Natural killer cell (primary cell): ENCODE measurements at regions of chr1 and their contacts with region 1.

Region 1: DNA sequence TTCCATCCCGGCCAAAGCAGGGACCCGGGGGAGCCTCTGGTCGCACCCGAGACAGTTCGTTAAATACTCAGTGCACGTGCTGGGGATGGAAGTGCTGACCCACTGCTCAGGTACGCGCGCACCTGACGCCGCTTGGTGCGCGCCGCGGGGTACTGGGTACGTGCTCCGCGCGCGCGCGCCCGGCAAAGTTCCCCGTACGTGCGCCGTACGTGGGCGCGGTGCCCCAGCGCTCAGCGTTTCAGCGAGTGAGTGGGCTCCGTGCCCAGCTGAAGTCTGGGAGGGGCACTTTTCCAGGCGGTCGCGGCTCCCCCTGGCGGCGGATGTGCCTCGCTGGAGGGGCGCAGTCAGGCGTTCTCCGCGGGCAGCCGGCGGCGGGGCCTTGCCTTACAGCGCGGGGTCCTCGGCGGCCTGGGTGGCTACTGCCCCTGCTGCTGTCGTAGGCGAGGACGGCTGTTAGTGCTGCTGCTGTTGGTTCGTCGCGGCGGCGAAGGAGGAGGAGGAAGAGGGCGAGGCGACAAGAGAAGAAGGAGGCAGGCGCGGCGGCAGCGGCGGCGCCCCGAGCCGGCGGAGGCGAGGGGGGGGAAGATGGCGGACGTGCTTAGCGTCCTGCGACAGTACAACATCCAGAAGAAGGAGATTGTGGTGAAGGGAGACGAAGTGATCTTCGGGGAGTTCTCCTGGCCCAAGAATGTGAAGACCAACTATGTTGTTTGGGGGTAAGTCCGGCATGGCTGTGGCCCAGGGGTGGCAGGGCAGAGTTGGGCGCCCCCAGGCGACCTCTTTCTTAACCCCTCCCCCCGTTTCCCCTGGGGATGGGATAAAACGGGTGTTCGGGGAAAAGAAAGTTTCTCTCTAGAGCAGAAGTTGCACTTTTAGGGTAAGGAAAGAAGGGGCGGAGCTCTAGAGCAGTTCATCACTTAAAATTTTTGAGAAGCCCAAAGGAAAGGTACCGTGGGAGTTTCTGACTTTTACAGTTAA is at the start of gene CDC73:
- DNase-seq: peak; percentile 98 to 99
- ATAC-seq: peak; percentile 91 to 98 (median 94)
- H3K4me3 ChIP-seq: peak within 1 kb of the TSS; percentile 93
- H3K4me3 Mint-ChIP-seq: peak within 1 kb of the TSS; percentile 93
- H3K27ac ChIP-seq: peak within 1 kb of the TSS; percentile 97
- H3K27ac Mint-ChIP-seq: peak within 1 kb of the TSS; percentile 88 to 95
- H3K4me1 ChIP-seq: peaks cover 13% of the 10 kb centered on the region
- H3K4me1 Mint-ChIP-seq: peaks cover 46 to 51% of the 10 kb centered on the region in 2 donors
- H3K27me3 ChIP-seq: no peaks in the 10 kb centered on the region
- H3K27me3 Mint-ChIP-seq: no peaks in the 10 kb centered on the region
- CTCF ChIP-seq: peak; percentile 96
- total RNA-seq, gene CDC73: 73.2 to 86.0 (median 82.6) TPM

Region 2: DNA sequence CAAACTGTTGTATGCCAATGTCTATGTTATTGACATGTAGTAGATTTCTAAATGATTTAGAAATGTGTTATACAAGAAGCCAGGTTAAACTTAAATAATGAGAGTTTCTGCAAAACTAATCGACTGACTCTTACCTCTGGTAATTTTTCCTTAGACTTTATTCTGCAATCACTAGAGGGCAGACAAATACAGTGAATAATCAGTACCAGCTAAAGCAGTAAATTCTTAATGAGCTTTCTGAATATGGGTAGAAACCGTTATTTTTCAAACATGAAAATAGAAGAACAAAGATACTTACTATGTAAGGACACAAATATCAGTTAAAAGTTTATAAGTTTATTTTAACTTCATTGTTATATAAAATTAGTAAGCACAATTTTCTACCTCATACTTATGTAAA is 644.3 kb before region 1 on chr1:
- intact Hi-C with region 1: loop called (anchors 5 kb)
- DNase-seq: peak in 1 of 2 donors; percentile 69
- ATAC-seq: peak in 2 of 3 donors; percentile 70 to 74
- H3K4me3 ChIP-seq: no peak overlapping the region
- H3K4me3 Mint-ChIP-seq: no peak overlapping the region
- H3K27ac ChIP-seq: no peak overlapping the region
- H3K27ac Mint-ChIP-seq: no peak overlapping the region
- H3K4me1 ChIP-seq: no peaks in the 10 kb centered on the region
- H3K4me1 Mint-ChIP-seq: no peaks in the 10 kb centered on the region
- H3K27me3 ChIP-seq: peaks cover 3% of the 10 kb centered on the region
- H3K27me3 Mint-ChIP-seq: no peaks in the 10 kb centered on the region
- CTCF ChIP-seq: peak; percentile 61

Region 3: GRCh38 chr1:192767798-192768197 is 354.1 kb before region 1 on chr1:
- intact Hi-C with region 1: no loop called
- DNase-seq: no peak
- ATAC-seq: no peak
- H3K4me3 ChIP-seq: no peak overlapping the region
- H3K4me3 Mint-ChIP-seq: no peak overlapping the region
- H3K27ac ChIP-seq: no peak overlapping the region
- H3K27ac Mint-ChIP-seq: no peak overlapping the region
- H3K4me1 ChIP-seq: no peaks in the 10 kb centered on the region
- H3K4me1 Mint-ChIP-seq: peaks cover 0 to 3% of the 10 kb centered on the region in 2 donors
- H3K27me3 ChIP-seq: no peaks in the 10 kb centered on the region
- H3K27me3 Mint-ChIP-seq: peaks cover 13 to 16% of the 10 kb centered on the region in 2 donors
- CTCF ChIP-seq: no peak

Region 4: DNA sequence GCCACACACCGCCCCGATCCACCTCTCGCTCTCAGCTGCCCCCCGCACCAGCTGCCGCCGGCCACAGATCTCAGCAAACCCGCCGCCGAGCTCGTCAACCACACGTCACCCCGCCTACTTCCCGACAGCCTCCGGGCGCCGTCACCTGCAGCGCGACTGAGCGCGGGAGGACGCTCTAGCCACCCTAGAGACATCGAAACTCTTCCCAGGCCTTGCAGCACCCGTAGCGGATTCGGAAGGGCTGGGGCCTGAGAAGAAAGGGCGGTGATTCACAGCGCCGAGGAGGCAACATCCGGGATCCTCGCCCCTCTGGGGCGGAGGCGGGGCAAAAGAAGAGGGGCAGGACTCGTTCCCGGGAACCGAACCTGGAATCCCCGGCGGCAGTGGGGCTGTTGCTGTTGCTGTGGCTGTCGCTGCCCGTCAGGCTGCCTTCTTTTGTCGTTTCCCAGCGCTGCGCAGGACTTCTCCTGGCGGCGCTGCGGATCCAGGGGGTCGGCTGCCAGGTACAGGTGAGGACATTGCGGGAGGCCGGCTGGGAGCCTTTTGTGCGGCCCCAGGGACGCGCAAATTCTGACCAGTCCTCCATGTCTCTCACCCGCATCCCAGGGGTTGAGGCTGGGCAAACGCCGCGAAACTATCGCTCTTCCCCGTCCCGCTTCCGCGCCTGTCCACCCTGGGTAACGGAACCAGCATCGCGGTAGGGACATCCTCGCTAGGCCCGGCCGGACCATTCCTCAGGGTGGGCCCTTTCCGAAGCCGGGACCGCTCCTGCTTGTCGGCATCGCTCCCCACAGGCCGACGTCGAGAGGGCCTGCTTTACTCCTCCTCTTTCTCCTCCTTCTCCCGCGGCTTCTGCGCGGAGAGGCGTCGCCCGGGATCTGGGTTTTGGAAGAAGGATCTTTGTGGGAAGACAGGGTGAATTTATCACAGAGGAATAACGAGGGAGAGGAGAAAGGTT is 62.4 kb before region 1 on chr1 and contains the starts of genes RO60 and UCHL5:
- intact Hi-C with region 1: loop called (anchors 1 kb)
- DNase-seq: peak; percentile 87 to 98
- ATAC-seq: peak; percentile 85 to 96 (median 88)
- H3K4me3 ChIP-seq: peak within 1 kb of the TSS; percentile 99
- H3K4me3 Mint-ChIP-seq: peak within 1 kb of the TSS; percentile 98
- H3K27ac ChIP-seq: peak within 1 kb of the TSS; percentile 98
- H3K27ac Mint-ChIP-seq: peak within 1 kb of the TSS; percentile 98
- H3K4me1 ChIP-seq: peaks cover 14% of the 10 kb centered on the region
- H3K4me1 Mint-ChIP-seq: peaks cover 67 to 77% of the 10 kb centered on the region in 2 donors
- H3K27me3 ChIP-seq: no peaks in the 10 kb centered on the region
- H3K27me3 Mint-ChIP-seq: no peaks in the 10 kb centered on the region
- CTCF ChIP-seq: no peak
- total RNA-seq, gene RO60: 74.3 to 95.5 (median 78.9) TPM
- total RNA-seq, gene UCHL5: 44.3 to 53.9 (median 51.9) TPM

Region 5: DNA sequence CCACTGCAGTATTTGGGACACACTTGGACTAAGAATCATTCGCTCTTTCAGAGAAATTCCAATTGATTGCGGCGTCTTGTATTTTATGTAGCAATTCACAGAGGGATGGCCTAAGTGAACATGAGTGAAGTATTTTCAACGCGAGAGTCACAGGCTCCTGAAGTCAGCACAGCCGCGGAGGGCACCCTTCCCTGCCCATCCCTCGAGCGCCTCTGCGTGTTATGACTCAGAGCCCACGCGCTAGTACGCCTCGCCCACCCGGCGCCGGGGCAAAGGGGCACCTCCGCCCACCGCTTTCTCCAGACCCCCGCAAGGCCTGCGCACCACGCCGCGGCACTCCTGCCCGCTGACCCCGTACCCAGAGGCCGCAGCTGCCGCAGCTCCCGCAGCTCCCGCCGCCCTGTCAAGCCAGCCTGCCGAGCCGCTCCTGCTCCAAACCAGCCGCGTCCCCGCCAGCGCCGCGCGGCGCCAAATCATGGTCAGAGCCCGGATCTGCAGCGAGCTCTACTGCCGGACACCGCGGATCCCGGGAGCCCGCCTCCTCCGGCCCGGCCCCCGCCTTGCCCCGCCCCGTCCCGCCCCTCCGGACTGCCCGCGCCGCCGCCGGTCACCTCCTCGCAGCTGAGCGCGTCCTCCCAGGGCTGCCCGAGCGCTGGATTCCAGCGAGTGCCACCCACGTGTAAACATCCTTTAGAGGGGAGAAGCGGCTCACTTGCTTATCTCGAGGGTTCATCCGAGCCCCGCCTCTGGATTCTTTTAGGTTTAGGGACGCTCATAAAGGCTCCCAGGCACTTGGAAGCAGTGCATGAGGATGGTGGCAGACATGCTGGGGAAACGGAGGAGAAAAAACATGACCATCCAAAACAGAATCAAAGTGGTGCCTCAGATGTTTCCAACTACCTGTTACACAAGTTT is 16.7 kb before region 1 on chr1 and contains the start of gene GLRX2:
- intact Hi-C with region 1: loop called (anchors 1 kb)
- DNase-seq: peak; percentile 56 to 76
- ATAC-seq: peak; percentile 85 to 93 (median 92)
- H3K4me3 ChIP-seq: peak within 1 kb of the TSS; percentile 82
- H3K4me3 Mint-ChIP-seq: peak within 1 kb of the TSS; percentile 94
- H3K27ac ChIP-seq: peak within 1 kb of the TSS; percentile 64
- H3K27ac Mint-ChIP-seq: peak within 1 kb of the TSS; percentile 81 to 88
- H3K4me1 ChIP-seq: peaks cover 12% of the 10 kb centered on the region
- H3K4me1 Mint-ChIP-seq: peaks cover 16 to 27% of the 10 kb centered on the region in 2 donors
- H3K27me3 ChIP-seq: no peaks in the 10 kb centered on the region
- H3K27me3 Mint-ChIP-seq: no peaks in the 10 kb centered on the region
- CTCF ChIP-seq: no peak
- total RNA-seq, gene GLRX2: 7.7 to 11.3 (median 9.5) TPM

Region 6: GRCh38 chr1:193143285-193143684 is 21.4 kb after region 1 on chr1:
- intact Hi-C with region 1: no loop called
- DNase-seq: peak in 1 of 2 donors; percentile 43
- ATAC-seq: no peak
- H3K4me3 ChIP-seq: no peak overlapping the region
- H3K4me3 Mint-ChIP-seq: no peak overlapping the region
- H3K27ac ChIP-seq: no peak overlapping the region
- H3K27ac Mint-ChIP-seq: no peak overlapping the region
- H3K4me1 ChIP-seq: no peaks in the 10 kb centered on the region
- H3K4me1 Mint-ChIP-seq: peaks cover 0 to 11% of the 10 kb centered on the region in 2 donors
- H3K27me3 ChIP-seq: no peaks in the 10 kb centered on the region
- H3K27me3 Mint-ChIP-seq: no peaks in the 10 kb centered on the region
- CTCF ChIP-seq: peak; percentile 14